Ascending aorta (tissue), 2 donors: ENCODE measurements at regions of chr17 and their contacts with region 1.

Region 1: GRCh38 chr17:8222630-8223356 is 12.4 kb upstream of the AURKB start:
- DNase-seq: peak; percentile 79 to 97
- H3K4me3 ChIP-seq: peak overlapping the region; percentile 72 to 82
- H3K27ac ChIP-seq: peak overlapping the region; percentile 94 to 96
- H3K4me1 ChIP-seq: peaks cover 8 to 18% of the 10 kb centered on the region in 2 donors
- H3K27me3 ChIP-seq: no peaks in the 10 kb centered on the region
- CTCF ChIP-seq: no peak

Region 2: GRCh38 chr17:7915611-7916382 is 307.0 kb before region 1 on chr17 and contains the start of gene RNF227:
- intact Hi-C with region 1: loop called (anchors 5 kb)
- DNase-seq: peak; percentile 60 to 95
- H3K4me3 ChIP-seq: peak within 1 kb of the TSS; percentile 53 to 65
- H3K27ac ChIP-seq: peak within 1 kb of the TSS; percentile 92 to 97
- H3K4me1 ChIP-seq: peaks cover 6 to 11% of the 10 kb centered on the region in 2 donors
- H3K27me3 ChIP-seq: no peaks in the 10 kb centered on the region
- CTCF ChIP-seq: no peak
- total RNA-seq, gene RNF227: 0.32 TPM

Region 3: GRCh38 chr17:8138672-8139371 is 84.0 kb before region 1 on chr17:
- intact Hi-C with region 1: loop called (anchors 5 kb)
- DNase-seq: peak; percentile 86 to 98
- H3K4me3 ChIP-seq: peak overlapping the region; percentile 11 to 36
- H3K27ac ChIP-seq: peak overlapping the region; percentile 77
- H3K4me1 ChIP-seq: peaks cover 4 to 16% of the 10 kb centered on the region in 2 donors
- H3K27me3 ChIP-seq: no peaks in the 10 kb centered on the region
- CTCF ChIP-seq: peak; percentile 82 to 91 (median 87)

Region 4: GRCh38 chr17:8189711-8190477 is 32.9 kb before region 1 on chr17 and contains the start of gene BORCS6:
- intact Hi-C with region 1: loop called (anchors 1 kb)
- DNase-seq: peak; percentile 97 to 99
- H3K4me3 ChIP-seq: peak within 1 kb of the TSS; percentile 69 to 81
- H3K27ac ChIP-seq: peak within 1 kb of the TSS; percentile 96 to 97
- H3K4me1 ChIP-seq: peaks cover 14 to 28% of the 10 kb centered on the region in 2 donors
- H3K27me3 ChIP-seq: no peaks in the 10 kb centered on the region
- CTCF ChIP-seq: peak in 1 of 3 experiments; percentile 6
- total RNA-seq, gene BORCS6: 29.5 TPM

Region 5: DNA sequence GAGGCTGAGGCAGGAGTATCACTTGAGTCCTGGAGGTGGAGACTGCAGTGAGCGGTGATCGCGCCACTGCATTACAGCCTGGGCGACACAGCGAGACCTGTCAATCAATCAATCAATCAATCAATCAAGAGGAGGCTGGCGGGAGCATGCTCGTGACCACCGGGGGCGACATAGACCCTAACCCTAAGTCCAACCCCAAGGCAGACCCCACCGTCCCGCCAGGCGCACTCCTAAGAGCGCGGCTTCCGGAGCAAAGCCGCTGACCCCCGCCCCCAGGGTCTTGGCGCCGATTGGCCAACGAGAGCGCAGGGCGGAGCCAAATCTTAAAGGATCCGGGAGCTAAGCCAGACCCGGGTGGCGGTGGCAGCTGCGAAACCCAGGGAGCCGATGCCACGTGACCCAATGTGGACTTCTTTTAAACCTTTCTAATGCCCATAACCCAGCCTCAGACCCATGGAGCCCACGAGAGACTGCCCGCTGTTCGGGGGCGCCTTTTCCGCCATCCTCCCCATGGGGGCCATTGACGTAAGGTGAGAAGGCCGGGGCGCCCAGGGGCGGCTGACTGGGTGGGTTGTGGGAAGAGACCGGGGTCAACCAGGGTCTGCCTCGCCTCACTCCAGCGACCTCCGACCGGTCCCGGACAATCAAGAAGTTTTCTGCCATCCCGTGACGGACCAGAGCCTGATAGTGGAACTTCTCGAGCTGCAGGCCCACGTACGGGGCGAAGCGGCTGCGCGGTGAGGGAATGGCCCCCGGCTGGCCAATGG is 65.7 kb after region 1 on chr17 and contains the start of gene RANGRF:
- intact Hi-C with region 1: loop called (anchors 2 kb)
- DNase-seq: peak; percentile 42 to 93
- H3K4me3 ChIP-seq: peak within 1 kb of the TSS; percentile 81 to 87
- H3K27ac ChIP-seq: peak within 1 kb of the TSS; percentile 89 to 94
- H3K4me1 ChIP-seq: peaks cover 4 to 11% of the 10 kb centered on the region in 2 donors
- H3K27me3 ChIP-seq: no peaks in the 10 kb centered on the region
- CTCF ChIP-seq: no peak
- total RNA-seq, gene RANGRF: 15.5 TPM

Region 6: GRCh38 chr17:8383143-8383822 is 160.5 kb after region 1 on chr17 and contains the start of gene RPL26:
- intact Hi-C with region 1: loop called (anchors 10 kb)
- DNase-seq: peak; percentile 94 to 99
- H3K4me3 ChIP-seq: peak within 1 kb of the TSS; percentile 93 to 95
- H3K27ac ChIP-seq: peak within 1 kb of the TSS; percentile 76 to 81
- H3K4me1 ChIP-seq: peaks cover 11 to 19% of the 10 kb centered on the region in 2 donors
- H3K27me3 ChIP-seq: no peaks in the 10 kb centered on the region
- CTCF ChIP-seq: peak; percentile 96 to 99 (median 97)
- total RNA-seq, gene RPL26: 1,547 TPM